ENCODE measurements at regions of chr14 and their contacts with region 1.

Region 1: DNA sequence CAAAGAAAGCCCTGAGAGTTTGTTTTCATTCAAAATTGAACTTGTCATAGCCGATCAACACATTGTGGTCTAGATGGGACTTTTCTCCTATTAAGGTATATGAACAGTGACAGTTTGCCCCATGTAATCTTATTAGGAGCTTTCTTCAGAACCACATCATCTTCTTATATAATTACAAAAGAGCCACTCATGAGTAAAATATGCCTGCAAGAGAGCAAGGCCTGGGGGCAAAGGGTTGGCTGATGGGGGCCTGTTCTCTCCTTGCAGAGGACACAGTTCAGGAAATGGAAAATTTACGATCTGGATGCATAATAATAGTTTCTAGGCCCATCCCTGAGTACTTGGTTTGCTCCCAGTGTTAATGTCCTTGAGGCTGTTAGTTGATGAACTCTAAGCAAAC is 87.8 kb downstream of the FLRT2 start:
- DNase-seq: peak; percentile 73
- H3K4me3 ChIP-seq: no peak overlapping the region
- H3K27ac ChIP-seq: no peak overlapping the region
- H3K4me1 ChIP-seq: peaks cover 31% of the 10 kb centered on the region
- H3K27me3 ChIP-seq: no peaks in the 10 kb centered on the region
- CTCF ChIP-seq: no peak

Region 2: DNA sequence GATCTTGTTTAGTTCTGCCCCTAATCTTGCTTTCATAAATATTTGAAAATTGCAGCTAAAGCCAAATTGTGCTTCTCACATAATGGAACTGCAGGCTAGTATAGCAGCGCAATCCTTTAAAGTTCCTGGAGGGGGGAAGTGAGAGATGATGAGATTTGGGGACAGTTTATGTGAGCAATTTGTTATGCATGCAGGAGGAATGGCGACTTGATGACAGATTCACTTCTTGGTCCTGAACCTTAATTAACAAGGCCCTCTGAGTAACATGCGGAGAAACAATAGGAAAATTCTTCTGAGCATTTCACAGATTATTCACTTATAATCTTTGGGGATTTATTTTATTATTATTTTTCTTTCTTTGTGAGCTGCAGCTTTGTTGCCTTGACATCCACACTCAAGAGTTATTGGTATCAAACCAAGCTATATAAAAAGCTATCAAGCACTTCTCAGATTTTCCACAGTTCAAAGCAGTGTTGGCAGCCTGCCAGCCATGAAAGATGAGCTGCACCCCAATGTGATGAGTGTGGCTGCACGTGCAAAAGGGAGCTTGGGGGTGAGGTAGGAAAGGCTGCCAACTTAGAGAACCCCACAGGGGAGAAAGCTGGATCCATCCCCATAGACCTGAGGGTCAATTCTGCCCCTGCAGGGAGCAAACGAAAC is 1750.1 kb before region 1 on chr14:
- CTCF ChIA-PET with region 1: no interaction called
- POLR2A ChIA-PET with region 1: interaction called, 21 read pairs
- intact Hi-C with region 1: no loop called
- DNase-seq: peak; percentile 51
- H3K4me3 ChIP-seq: no peak overlapping the region
- H3K27ac ChIP-seq: no peak overlapping the region
- H3K4me1 ChIP-seq: peaks cover 15% of the 10 kb centered on the region
- H3K27me3 ChIP-seq: no peaks in the 10 kb centered on the region
- CTCF ChIP-seq: no peak

Region 3: DNA sequence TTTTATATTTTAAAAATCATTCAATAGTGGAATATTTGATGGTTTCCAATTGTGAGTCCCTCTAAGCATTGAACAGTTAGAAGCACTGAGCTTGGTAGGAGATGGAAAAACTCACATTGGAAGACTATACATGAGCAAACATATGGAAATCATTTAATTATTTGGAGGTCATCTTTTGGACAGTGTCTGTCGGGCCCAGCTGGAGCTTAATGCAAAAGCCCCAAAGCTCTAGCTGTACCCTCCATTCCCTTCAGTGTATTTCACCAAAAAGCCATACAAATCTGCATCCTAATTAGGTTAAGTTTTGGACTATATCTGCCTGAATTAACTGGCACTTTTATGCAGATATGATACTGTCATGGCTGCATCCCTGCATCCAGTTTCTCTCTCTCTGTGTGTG is 277.8 kb after region 1 on chr14:
- CTCF ChIA-PET with region 1: no interaction called
- POLR2A ChIA-PET with region 1: no interaction called
- intact Hi-C with region 1: no loop called
- DNase-seq: no peak
- H3K4me3 ChIP-seq: no peak overlapping the region
- H3K27ac ChIP-seq: no peak overlapping the region
- H3K4me1 ChIP-seq: no peaks in the 10 kb centered on the region
- H3K27me3 ChIP-seq: no peaks in the 10 kb centered on the region
- CTCF ChIP-seq: no peak

Measured in A673 (cell line).